ENCODE measurements at regions of chr22 and their contacts with region 1.

Region 1: DNA sequence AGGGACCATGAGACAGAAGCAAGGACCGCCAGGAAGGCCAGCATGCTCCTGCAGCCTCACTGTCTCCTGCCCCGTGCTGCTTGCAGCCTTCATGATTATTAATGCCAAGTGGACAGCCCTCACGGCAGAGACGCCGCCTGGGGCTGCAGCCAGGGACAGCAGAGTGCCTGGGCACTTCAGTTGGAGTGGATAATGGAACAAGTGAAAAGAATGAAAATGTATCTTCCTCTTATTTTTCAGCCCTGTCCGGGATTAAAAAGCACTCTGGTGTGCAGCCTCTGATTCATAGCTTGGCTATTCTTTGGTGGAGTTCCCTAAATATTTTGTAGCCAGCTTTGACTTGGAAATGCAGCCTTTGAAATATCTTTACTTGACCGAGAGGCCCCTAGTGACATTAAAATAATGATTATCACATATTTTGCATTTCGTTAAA is 1404.2 kb downstream of the BRD1 start:
- DNase-seq: no peak
- ATAC-seq: no peak

Region 2: GRCh38 chr22:46803031-46803880 is 1620.2 kb before region 1 on chr22:
- intact Hi-C with region 1: loop called (anchors 10 kb)
- DNase-seq: peak; percentile 67
- ATAC-seq: peak; percentile 38

Measured in sciatic nerve (tissue), 2 donors.